ENCODE measurements at regions of chr10 and their contacts with region 1.

Region 1: GRCh38 chr10:61284222-61284890 is 168.8 kb downstream of the TMEM26 start:
- DNase-seq: no peak
- ATAC-seq: no peak
- H3K4me3 Mint-ChIP-seq: peak overlapping the region; percentile 41
- H3K27ac Mint-ChIP-seq: no peak overlapping the region
- H3K4me1 Mint-ChIP-seq: peaks cover 24% of the 10 kb centered on the region
- H3K27me3 Mint-ChIP-seq: peaks cover 7% of the 10 kb centered on the region
- CTCF ChIP-seq: peak; percentile 75

Region 2: DNA sequence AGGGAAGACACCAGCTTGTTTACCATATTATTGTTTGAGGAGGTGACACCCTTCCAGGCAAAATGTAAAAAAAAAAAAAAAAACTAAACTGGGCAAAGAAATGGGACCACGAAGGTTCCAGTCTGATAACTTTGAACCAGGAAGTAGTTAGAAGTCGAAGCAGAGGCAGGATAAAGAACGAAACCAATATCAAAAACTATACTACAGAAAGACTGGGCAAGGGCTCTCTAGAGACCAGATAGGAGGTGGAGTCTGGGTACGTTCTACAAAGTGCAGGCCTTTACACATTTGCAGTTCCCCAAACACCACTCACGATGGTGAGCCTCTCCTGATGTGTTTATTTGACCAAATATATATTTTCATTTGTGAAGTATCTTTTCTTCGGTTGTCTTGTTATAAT is 631.7 kb before region 1 on chr10:
- CTCF ChIA-PET with region 1: no interaction called
- POLR2A ChIA-PET with region 1: no interaction called
- intact Hi-C with region 1: loop called (anchors 10 kb)
- DNase-seq: no peak
- ATAC-seq: peak; percentile 100
- H3K4me3 Mint-ChIP-seq: peak overlapping the region; percentile 28
- H3K27ac Mint-ChIP-seq: peak overlapping the region; percentile 64
- H3K4me1 Mint-ChIP-seq: peaks cover 14% of the 10 kb centered on the region
- H3K27me3 Mint-ChIP-seq: no peaks in the 10 kb centered on the region
- CTCF ChIP-seq: no peak

Region 3: DNA sequence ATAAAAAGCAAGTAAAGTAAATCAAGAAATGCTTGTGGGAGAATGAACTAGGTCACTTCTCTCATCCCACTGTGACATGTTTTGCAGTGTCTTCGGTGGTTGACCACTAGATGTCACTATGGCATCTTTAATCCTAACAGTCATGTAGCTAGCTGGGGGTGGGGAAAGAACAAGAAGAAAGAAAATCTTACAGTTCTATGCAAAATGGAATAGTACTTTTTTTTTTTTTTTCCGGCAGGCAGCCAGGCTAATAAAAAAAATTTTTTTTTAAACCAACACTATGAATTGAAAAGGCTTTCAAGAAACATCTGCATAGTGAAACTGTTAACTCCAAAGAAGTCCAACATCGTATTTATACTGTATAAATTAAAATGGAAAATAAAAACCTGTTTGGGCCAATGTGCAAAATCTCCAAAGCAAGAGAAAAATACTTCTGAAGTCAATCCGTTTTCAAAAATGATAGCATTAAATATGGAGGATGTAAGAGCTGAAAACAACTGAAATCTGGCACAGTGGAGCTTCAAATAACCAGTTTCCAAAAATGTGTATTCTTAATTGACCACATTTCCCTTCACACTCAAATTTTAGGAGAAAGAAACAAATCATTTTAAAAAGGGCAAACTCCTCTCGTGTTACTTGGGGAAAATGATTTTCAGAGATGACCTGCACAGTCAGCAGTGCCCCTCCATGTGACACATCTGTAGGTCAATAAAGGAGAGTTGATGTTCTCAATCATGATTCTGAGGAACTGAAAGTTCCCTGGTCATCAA is 467.5 kb before region 1 on chr10:
- CTCF ChIA-PET with region 1: interaction called, 10 read pairs
- POLR2A ChIA-PET with region 1: no interaction called
- intact Hi-C with region 1: loop called (anchors 1 kb)
- DNase-seq: no peak
- ATAC-seq: peak; percentile 79
- H3K4me3 Mint-ChIP-seq: no peak overlapping the region
- H3K27ac Mint-ChIP-seq: no peak overlapping the region
- H3K4me1 Mint-ChIP-seq: peaks cover 9% of the 10 kb centered on the region
- H3K27me3 Mint-ChIP-seq: no peaks in the 10 kb centered on the region
- CTCF ChIP-seq: peak; percentile 90

Region 4: GRCh38 chr10:60916025-60916424 is 368.3 kb before region 1 on chr10:
- CTCF ChIA-PET with region 1: no interaction called
- POLR2A ChIA-PET with region 1: no interaction called
- intact Hi-C with region 1: no loop called
- DNase-seq: no peak
- ATAC-seq: no peak
- H3K4me3 Mint-ChIP-seq: no peak overlapping the region
- H3K27ac Mint-ChIP-seq: no peak overlapping the region
- H3K4me1 Mint-ChIP-seq: peaks cover 6% of the 10 kb centered on the region
- H3K27me3 Mint-ChIP-seq: peaks cover 5% of the 10 kb centered on the region
- CTCF ChIP-seq: no peak

Region 5: DNA sequence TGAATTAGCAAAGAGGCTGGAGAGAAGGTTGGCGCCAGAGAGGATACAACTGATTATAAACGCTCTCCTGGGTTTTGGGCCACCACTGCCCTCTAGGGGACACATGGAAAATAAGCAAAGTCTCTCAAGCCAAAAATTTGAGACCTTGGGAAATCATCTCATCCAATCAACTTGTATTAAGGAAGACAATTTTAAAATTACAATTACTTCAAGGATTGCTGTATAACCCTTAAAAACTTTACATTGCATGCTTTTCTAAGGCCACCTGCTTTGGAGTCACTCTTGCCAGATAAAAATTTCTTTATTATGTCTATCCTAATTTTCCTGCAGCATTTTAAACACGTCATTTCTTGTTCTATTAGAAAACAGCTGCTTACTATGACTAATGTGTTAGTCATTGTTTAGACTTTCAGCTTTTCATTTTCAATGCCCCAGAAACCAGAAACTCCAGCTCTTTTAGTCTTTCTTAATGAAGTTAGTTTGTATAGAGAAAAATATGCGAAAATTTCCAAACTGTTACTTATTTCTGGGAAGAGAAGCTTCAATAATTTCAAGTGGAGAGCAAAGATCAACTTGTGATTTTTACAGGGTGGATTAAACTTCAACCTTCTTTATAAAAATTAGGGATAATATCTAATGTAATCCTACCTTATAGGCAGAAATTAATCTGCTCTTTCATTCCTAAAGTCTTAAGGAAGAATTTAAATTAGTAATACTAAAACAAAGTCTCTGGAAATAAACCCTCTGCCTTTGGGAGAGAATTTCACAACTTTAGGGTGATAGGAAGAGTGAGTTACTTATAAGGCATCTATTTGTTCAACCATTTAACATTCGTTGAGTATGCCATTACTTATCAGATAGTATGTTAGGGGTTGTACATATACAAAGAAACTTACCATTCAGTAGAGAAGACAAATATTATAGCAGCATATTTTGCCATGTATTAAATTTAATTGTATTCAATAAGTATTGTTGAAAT is 319.8 kb before region 1 on chr10:
- CTCF ChIA-PET with region 1: no interaction called
- POLR2A ChIA-PET with region 1: no interaction called
- intact Hi-C with region 1: loop called (anchors 1 kb)
- DNase-seq: no peak
- ATAC-seq: peak; percentile 59
- H3K4me3 Mint-ChIP-seq: no peak overlapping the region
- H3K27ac Mint-ChIP-seq: no peak overlapping the region
- H3K4me1 Mint-ChIP-seq: peaks cover 22% of the 10 kb centered on the region
- H3K27me3 Mint-ChIP-seq: peaks cover 8% of the 10 kb centered on the region
- CTCF ChIP-seq: peak; percentile 85

Region 6: GRCh38 chr10:61140765-61141392 is 143.5 kb before region 1 on chr10:
- CTCF ChIA-PET with region 1: interaction called, 8 read pairs
- POLR2A ChIA-PET with region 1: no interaction called
- intact Hi-C with region 1: loop called (anchors 1 kb)
- DNase-seq: no peak
- ATAC-seq: peak; percentile 58
- H3K4me3 Mint-ChIP-seq: no peak overlapping the region
- H3K27ac Mint-ChIP-seq: no peak overlapping the region
- H3K4me1 Mint-ChIP-seq: peaks cover 21% of the 10 kb centered on the region
- H3K27me3 Mint-ChIP-seq: peaks cover 4% of the 10 kb centered on the region
- CTCF ChIP-seq: no peak

Region 7: DNA sequence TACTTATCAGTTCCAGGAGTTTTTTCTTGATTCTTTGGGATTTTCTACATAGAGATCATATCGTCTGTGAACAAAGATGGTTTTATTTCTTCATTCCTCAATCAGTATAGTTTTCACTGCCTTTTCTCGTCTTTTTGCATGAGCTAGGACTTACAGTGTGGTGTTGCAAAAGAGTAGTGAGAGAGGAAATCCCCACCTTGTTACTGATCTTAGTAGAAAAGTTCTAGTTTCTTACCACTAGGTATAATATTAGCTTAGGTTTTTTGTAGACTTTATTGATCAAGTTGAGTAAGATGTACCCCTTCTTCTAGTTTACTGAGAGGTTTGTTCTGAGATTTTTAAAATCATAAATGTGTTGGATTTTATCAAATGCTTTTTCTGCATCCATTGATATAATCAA is 45.5 kb after region 1 on chr10:
- CTCF ChIA-PET with region 1: no interaction called
- POLR2A ChIA-PET with region 1: no interaction called
- intact Hi-C with region 1: no loop called
- DNase-seq: no peak
- ATAC-seq: no peak
- H3K4me3 Mint-ChIP-seq: no peak overlapping the region
- H3K27ac Mint-ChIP-seq: no peak overlapping the region
- H3K4me1 Mint-ChIP-seq: no peaks in the 10 kb centered on the region
- H3K27me3 Mint-ChIP-seq: peaks cover 11% of the 10 kb centered on the region
- CTCF ChIP-seq: no peak

Region 8: DNA sequence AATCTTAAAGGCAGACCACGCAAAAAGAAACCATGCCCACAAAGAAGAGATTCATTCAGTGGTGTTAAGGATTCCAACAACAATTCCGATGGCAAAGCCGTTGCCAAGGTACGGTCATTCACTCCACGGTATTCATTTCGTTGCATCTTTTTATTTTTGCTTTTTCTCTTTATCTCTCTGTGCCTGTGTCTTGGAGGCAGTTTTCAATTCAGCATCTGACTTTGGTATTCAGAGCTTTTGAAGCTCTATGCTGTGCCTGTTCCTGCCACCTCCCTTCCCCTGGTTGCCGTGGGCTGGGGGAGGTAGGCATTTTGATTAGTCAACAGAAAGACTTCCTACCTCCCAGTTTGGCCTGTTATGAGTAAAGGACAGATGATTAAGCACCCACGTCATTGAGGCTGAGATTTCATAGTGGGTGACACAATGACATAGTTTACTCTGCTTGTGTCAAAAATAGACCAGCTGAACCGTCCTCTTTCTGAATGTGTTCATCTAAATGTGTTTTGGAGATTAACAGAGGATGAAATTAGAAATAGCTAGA is 766.6 kb after region 1 on chr10:
- CTCF ChIA-PET with region 1: no interaction called
- POLR2A ChIA-PET with region 1: no interaction called
- intact Hi-C with region 1: loop called (anchors 10 kb)
- DNase-seq: no peak
- ATAC-seq: peak; percentile 60
- H3K4me3 Mint-ChIP-seq: peak overlapping the region; percentile 85
- H3K27ac Mint-ChIP-seq: peak overlapping the region; percentile 93
- H3K4me1 Mint-ChIP-seq: peaks cover 100% of the 10 kb centered on the region
- H3K27me3 Mint-ChIP-seq: no peaks in the 10 kb centered on the region
- CTCF ChIP-seq: no peak

Measured in activated B cell treated with CpG ODN at 0.5 μM for 24 hours (primary cell).